ENCODE measurements at regions of chr11 and their contacts with region 1.

Region 1: GRCh38 chr11:1502954-1503707 is 16.6 kb upstream of the MOB2 start:
- DNase-seq: no peak
- H3K4me3 ChIP-seq: no peak overlapping the region
- CTCF ChIP-seq: no peak
- POLR2A ChIP-seq: no peak

Region 2: GRCh38 chr11:870127-870413 is 633.1 kb before region 1 on chr11:
- intact Hi-C with region 1: no loop called
- DNase-seq: no peak
- H3K4me3 ChIP-seq: no peak overlapping the region
- CTCF ChIP-seq: no peak
- POLR2A ChIP-seq: no peak

Region 3: GRCh38 chr11:1281326-1281973 is 221.7 kb before region 1 on chr11:
- intact Hi-C with region 1: loop called (anchors 10 kb)
- DNase-seq: no peak
- H3K4me3 ChIP-seq: no peak overlapping the region
- CTCF ChIP-seq: no peak
- POLR2A ChIP-seq: no peak

Region 4: GRCh38 chr11:1825039-1825740 is 322.1 kb after region 1 on chr11:
- intact Hi-C with region 1: no loop called
- DNase-seq: peak in 1 of 2 donors; percentile 88
- H3K4me3 ChIP-seq: no peak overlapping the region
- CTCF ChIP-seq: no peak
- POLR2A ChIP-seq: no peak

Measured in lower leg skin (tissue), 4 donors.